Right ventricle myocardium inferior (tissue), 1 donor: ENCODE measurements at regions of chrX and their contacts with region 1.

Region 1: DNA sequence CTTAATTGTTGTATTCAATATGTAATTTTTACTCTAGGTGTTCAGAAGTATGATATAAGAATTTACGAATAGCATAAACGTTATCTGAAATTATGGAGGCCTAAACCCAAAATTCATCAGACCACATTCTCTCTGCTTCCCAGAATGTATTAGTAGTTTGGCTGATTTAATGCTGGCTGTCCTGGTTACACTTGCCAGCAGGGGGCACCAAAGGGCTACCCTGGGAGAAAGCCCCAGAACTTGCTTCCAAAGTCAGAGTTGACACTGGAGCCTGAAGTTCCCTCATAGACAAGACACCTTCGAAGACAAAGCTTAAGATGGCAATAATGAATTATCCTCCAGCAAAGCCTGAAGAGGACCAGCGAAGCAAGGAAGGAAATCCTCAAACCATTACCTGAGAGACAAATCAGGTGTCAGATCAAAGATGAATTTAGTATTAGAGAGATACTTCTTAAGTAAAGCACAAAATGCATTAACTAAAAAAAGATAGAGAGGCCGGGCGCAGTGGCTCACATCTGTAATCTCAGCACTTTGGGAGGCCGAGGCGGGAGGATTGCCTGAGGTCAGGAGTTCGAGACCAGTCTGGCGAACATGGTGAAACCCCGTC is 11.3 kb upstream of the ANOS1 start:
- DNase-seq: no peak
- ATAC-seq: no peak

Region 2: DNA sequence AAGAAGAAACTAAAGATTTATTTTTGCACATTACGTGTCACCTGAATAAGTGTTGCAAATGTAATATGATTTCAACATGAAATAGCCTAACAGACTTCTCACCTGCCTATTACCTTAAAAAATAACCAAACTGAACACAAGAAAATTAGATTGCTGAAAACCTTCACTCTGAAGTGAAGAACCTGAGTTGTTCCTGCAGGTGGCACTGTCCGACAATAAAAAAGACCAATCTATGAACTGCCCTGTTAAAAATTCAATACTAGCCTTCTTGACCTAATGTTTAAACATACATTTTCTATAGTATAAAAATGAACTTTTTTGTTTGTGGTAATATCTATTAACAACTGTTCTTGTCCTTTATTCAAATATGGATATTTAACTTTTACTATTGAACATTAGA is 746.8 kb before region 1 on chrX:
- intact Hi-C with region 1: loop called (anchors 2 kb)
- DNase-seq: no peak
- ATAC-seq: no peak

Region 3: GRCh38 chrX:8179656-8180055 is 563.6 kb before region 1 on chrX:
- intact Hi-C with region 1: loop called (anchors 10 kb)
- DNase-seq: no peak
- ATAC-seq: no peak

Region 4: GRCh38 chrX:8364369-8365141 is 378.7 kb before region 1 on chrX:
- intact Hi-C with region 1: loop called (anchors 10 kb)
- DNase-seq: no peak
- ATAC-seq: no peak

Region 5: GRCh38 chrX:8815464-8816065 is 72.3 kb after region 1 on chrX:
- intact Hi-C with region 1: loop called (anchors 10 kb)
- DNase-seq: no peak
- ATAC-seq: no peak